ENCODE measurements at regions of chr14 and their contacts with region 1.

Region 1: DNA sequence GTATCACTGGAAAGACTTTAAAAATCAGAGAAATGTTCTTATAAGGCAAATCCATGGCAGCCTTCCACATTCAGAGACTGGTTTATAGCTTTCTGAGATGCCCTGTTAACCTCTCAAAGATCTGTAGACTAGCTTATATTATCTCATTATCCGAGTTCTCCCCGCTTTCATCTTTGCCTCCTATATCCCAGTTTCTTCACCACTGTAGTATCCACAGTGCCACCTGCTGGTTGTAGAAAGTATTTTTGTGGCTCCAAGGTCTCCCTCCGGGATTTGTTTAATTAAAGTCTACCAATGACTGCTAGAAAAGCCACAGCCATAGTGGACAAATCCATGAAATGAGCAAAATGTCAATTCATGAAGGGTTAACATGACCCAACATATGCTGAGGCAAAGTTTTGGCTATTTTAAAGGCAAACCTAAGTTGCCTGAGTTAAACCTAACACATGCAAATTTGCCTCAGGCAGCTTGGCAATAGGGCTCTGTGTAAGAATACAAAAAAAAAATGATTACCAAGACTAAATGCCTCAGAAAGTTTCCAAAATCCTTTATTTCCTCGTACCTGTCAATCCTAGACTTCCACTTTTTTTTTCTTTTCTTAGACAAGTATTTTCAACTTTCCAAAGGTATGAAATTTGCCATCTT is 218.8 kb upstream of the BMP4 start:
- DNase-seq: no peak
- ATAC-seq: peak in 3 of 4 donors; percentile 48 to 65 (median 49)
- H3K4me3 ChIP-seq: no peak overlapping the region
- H3K27ac ChIP-seq: no peak overlapping the region
- H3K4me1 ChIP-seq: no peaks in the 10 kb centered on the region
- H3K27me3 ChIP-seq: no peaks in the 10 kb centered on the region
- CTCF ChIP-seq: peak; percentile 84

Region 2: DNA sequence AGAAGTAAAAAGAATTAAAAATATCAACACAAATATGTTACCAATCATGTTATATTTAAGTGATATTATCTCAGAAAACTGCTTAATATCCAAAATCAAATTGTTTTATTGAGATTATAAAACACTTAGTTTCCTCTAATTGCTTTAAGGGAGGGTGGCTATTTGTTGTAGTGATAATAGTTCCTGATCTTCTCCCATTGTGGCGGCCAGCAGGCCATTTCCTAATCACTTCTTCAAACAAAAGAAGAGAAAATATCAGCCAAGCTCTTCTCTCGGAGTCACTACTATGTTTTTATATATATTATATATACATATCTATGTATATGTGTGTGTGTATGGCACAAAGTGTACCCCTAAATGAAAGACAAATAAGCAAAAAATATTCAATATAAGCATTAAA is 1511.6 kb before region 1 on chr14:
- intact Hi-C with region 1: no loop called
- DNase-seq: no peak
- ATAC-seq: no peak
- H3K4me3 ChIP-seq: no peak overlapping the region
- H3K27ac ChIP-seq: no peak overlapping the region
- H3K4me1 ChIP-seq: no peaks in the 10 kb centered on the region
- H3K27me3 ChIP-seq: no peaks in the 10 kb centered on the region
- CTCF ChIP-seq: no peak

Region 3: DNA sequence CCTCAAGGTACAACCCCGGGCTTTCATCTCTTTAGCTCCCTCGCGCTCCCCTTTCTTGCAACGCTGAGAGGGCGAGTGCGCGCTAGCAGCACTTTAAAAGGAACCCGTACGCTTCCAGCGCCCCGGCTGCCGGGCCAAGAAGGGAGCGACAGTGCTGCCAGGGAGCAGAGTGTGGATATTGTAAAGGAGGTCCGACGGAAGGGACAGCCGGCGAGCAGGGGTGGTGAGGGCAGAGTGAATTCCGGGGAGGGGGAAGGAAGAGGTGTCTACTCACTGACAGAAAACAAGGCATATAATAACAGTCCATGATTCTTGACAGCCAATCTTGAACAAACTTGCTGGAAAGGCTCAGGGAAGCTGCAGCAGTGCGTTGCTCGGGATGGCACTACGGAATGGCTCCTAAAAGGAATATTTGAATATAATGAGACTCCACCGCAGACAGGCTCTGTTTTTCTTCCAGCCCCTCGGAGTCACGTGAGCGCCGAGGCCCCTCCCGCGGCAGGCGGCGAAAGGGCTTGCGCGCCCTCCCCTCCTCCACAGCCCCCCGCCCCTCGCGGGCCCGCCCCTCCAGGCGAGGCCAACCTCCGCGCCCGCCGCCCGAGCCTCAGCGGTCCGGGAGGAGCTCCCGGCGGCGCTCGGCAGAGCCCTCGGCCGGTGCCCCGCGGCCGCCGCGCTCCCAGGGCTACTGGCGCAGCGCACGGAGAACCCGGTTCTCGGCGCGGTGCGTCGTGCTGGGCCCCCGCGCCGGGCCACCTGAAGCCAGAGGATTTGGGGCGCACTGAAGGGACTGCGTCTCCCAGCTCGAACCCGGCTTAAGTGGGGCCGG is 222.2 kb before region 1 on chr14:
- intact Hi-C with region 1: loop called in 1 of 2 experiments (anchors 5 kb)
- DNase-seq: peak; percentile 88 to 91
- ATAC-seq: peak; percentile 78 to 84 (median 78)
- H3K4me3 ChIP-seq: peak overlapping the region; percentile 70
- H3K27ac ChIP-seq: peak overlapping the region; percentile 70
- H3K4me1 ChIP-seq: peaks cover 17% of the 10 kb centered on the region
- H3K27me3 ChIP-seq: peaks cover 0 to 80% (median 12%) of the 10 kb centered on the region in 3 donors
- CTCF ChIP-seq: no peak